ENCODE measurements at regions of chr6 and their contacts with region 1.

Region 1: DNA sequence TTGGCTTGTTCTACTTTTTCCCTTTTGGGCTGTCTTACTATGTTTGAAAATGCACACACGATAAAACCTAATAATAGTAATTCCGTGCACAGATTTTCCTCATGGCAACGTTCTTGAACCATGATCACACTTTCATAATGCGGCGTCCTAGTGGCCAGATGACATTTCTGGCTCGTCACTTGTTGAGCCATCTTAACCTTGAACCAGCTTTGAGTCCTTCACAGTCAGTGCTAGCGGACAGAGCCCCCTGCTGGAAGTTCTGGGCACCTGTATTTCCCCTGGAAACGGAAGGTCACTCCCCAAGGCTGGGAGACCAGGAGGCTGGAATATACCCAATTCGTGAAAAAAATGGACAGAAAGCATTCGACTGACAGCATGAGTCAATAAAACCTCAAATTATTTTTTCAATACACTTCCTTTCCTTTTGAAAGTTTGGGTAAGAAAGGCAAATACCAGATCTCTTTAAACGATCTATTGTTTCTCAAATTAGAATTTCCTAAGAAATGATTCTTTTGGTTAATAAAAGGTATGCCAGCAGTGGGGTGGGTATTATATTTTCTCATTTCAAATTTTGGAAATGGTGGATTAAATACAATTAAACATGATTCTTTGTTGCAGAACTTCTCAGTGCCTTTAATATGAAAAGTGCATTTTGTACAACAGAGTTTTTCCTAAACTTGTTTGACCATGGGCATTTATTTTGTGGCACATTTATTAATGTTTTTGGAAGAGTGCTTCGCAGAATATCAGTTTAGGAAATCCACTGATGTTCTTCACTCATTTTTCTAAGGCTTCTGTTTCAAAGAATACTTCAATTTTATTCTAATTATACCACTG is 542.3 kb downstream of the QKI start:
- DNase-seq: peak; percentile 76 to 78
- H3K4me3 ChIP-seq: no peak overlapping the region
- H3K4me3 Mint-ChIP-seq: no peak overlapping the region
- H3K27ac Mint-ChIP-seq: no peak overlapping the region
- H3K4me1 ChIP-seq: no peaks in the 10 kb centered on the region
- H3K4me1 Mint-ChIP-seq: no peaks in the 10 kb centered on the region
- H3K27me3 ChIP-seq: no peaks in the 10 kb centered on the region
- H3K27me3 Mint-ChIP-seq: peaks cover 4% of the 10 kb centered on the region
- CTCF ChIP-seq: peak; percentile 64 to 80

Region 2: GRCh38 chr6:162856885-162857284 is 1099.9 kb before region 1 on chr6:
- CTCF ChIA-PET with region 1: no interaction called
- POLR2A ChIA-PET with region 1: no interaction called
- intact Hi-C with region 1: loop called (anchors 1 kb)
- DNase-seq: peak in 1 of 2 experiments; percentile 36
- H3K4me3 ChIP-seq: no peak overlapping the region
- H3K4me3 Mint-ChIP-seq: no peak overlapping the region
- H3K27ac Mint-ChIP-seq: no peak overlapping the region
- H3K4me1 ChIP-seq: no peaks in the 10 kb centered on the region
- H3K4me1 Mint-ChIP-seq: no peaks in the 10 kb centered on the region
- H3K27me3 ChIP-seq: no peaks in the 10 kb centered on the region
- H3K27me3 Mint-ChIP-seq: peaks cover 6% of the 10 kb centered on the region
- CTCF ChIP-seq: peak; percentile 31 to 61

Region 3: DNA sequence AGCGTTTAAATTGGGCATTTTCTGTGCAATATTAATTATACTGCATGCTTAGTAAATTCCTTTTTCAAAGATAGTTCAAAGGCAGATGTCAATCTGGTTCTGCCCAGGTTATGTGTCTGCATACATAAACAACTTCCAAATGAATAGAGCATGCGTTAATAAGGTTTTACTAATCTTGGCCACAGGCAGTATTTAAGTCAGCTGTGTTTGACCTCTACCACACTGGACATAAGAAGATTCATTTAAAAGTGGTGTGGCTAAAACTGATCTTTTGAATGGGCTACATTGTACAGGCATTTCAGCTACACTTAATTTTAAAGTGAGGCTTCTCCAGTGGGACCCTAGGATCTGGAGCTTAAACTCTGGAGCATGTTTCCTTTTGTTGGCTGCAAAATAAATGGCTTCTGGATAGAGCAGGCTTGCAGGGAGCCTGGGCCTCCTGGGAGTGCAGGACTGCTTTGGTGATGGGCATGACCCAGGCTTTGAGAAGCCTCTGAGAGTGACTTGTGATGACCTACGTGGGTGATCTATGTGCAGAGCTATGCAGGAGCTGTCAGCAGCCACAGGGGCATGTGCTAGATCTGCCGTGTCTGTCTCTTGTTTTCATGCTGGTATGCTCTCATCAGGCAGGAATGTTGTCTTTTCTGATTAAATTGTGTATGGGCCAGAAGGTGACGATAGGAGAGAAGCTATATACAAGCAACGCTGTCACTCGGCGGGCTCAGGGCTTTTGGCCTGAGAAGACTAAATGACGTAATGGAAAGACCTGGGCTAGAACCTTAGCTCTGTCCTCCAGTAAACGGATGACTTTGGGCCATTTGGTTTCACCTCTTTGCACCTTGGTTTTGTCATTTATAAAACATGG is 211.0 kb before region 1 on chr6:
- CTCF ChIA-PET with region 1: no interaction called
- POLR2A ChIA-PET with region 1: no interaction called
- intact Hi-C with region 1: loop called (anchors 10 kb)
- DNase-seq: peak; percentile 69 to 82
- H3K4me3 ChIP-seq: no peak overlapping the region
- H3K4me3 Mint-ChIP-seq: no peak overlapping the region
- H3K27ac Mint-ChIP-seq: no peak overlapping the region
- H3K4me1 ChIP-seq: peaks cover 8% of the 10 kb centered on the region
- H3K4me1 Mint-ChIP-seq: no peaks in the 10 kb centered on the region
- H3K27me3 ChIP-seq: no peaks in the 10 kb centered on the region
- H3K27me3 Mint-ChIP-seq: no peaks in the 10 kb centered on the region
- CTCF ChIP-seq: no peak

Region 4: GRCh38 chr6:163828038-163828795 is 128.6 kb before region 1 on chr6:
- CTCF ChIA-PET with region 1: no interaction called
- POLR2A ChIA-PET with region 1: no interaction called
- intact Hi-C with region 1: no loop called
- DNase-seq: no peak
- H3K4me3 ChIP-seq: no peak overlapping the region
- H3K4me3 Mint-ChIP-seq: no peak overlapping the region
- H3K27ac Mint-ChIP-seq: no peak overlapping the region
- H3K4me1 ChIP-seq: no peaks in the 10 kb centered on the region
- H3K4me1 Mint-ChIP-seq: no peaks in the 10 kb centered on the region
- H3K27me3 ChIP-seq: no peaks in the 10 kb centered on the region
- H3K27me3 Mint-ChIP-seq: peaks cover 24% of the 10 kb centered on the region
- CTCF ChIP-seq: no peak

Region 5: DNA sequence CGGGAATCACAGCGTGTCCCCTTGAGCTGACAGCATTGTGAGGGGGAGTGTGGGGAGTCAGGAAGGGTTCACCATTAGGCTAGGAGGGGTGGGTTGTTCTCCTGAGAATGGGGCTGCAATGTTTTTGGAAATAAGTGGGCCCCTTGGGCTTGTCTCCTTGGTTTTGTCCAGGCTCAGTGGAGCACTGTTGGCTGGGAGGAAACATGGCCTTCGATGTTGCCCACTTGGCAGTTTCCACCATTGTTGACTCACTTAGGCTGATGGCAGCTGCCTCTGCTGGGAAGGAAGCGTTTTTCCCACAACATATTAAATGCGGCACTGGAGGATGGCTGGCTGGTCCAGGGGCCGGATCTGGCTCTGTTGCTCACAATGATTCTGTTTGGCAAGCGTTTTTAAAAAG is 30.1 kb before region 1 on chr6:
- CTCF ChIA-PET with region 1: no interaction called
- POLR2A ChIA-PET with region 1: no interaction called
- intact Hi-C with region 1: no loop called
- DNase-seq: no peak
- H3K4me3 ChIP-seq: no peak overlapping the region
- H3K4me3 Mint-ChIP-seq: no peak overlapping the region
- H3K27ac Mint-ChIP-seq: no peak overlapping the region
- H3K4me1 ChIP-seq: no peaks in the 10 kb centered on the region
- H3K4me1 Mint-ChIP-seq: peaks cover 6% of the 10 kb centered on the region
- H3K27me3 ChIP-seq: no peaks in the 10 kb centered on the region
- H3K27me3 Mint-ChIP-seq: peaks cover 3% of the 10 kb centered on the region
- CTCF ChIP-seq: no peak

Measured in Caco-2 (cell line).